ENCODE measurements at regions of chr19 and their contacts with region 1.

Region 1: GRCh38 chr19:771332-771785 is 20.4 kb downstream of the MISP start:
- DNase-seq: peak; percentile 55
- ATAC-seq: peak; percentile 75
- H3K4me3 ChIP-seq: no peak overlapping the region
- H3K27ac ChIP-seq: no peak overlapping the region
- H3K4me1 ChIP-seq: peaks cover 4 to 14% of the 10 kb centered on the region in 2 experiments
- H3K27me3 ChIP-seq: no peaks in the 10 kb centered on the region
- CTCF ChIP-seq: peak; percentile 44 to 77 (median 62); a peak in 5 of 6 replicates
- POLR2A ChIP-seq: no peak
- RAD21 ChIP-seq: peak; percentile 55

Region 2: GRCh38 chr19:860481-861101 is 89.2 kb after region 1 on chr19:
- CTCF ChIA-PET with region 1: interaction called, 6 read pairs
- POLR2A ChIA-PET with region 1: no interaction called
- RAD21 ChIA-PET with region 1: interaction called in 1 of 2 experiments, 3 read pairs
- intact Hi-C with region 1: loop called (anchors 2 kb)
- DNase-seq: peak; percentile 73
- ATAC-seq: peak; percentile 79
- H3K4me3 ChIP-seq: peak overlapping the region; percentile 71 to 78
- H3K27ac ChIP-seq: peak overlapping the region; percentile 96
- H3K4me1 ChIP-seq: peaks cover 14 to 32% of the 10 kb centered on the region in 2 experiments
- H3K27me3 ChIP-seq: no peaks in the 10 kb centered on the region
- CTCF ChIP-seq: peak in 1 of 3 experiments; percentile 23; a peak in 1 of 6 replicates
- POLR2A ChIP-seq: peak; percentile 61
- RAD21 ChIP-seq: peak; percentile 22; the same call in 1 of the 2 replicates

Region 3: DNA sequence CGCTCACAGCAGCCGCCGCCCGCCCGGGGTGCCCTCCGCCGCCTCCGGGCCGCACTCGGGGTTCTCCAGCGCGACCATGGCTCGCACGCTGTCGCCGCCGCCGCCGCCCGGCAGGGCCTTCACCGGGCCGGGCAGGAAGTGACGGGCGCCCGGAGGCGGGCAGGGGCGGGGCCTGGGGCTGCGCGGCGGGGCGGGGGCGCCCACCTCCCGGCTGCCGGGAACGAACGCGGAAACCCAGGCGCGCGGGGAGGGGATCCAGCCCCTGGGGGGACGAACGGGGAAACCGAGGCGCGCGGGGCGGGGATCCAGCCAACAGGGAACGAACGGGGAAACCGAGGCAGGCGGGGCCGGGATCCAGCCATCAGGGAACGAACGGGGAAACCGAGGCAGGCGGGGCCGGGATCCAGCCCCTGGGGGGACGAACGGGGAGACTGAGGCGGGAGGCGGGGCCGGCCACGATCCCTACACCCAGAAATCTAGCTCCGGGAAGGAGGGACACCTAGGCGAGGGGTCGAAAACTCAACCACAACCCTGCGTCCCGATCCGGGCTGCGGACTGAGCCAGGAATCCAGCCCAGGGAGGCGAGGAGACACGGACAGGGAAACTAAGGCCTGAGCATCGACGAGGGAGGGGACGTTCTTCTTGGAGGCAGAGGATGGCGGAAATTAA is 141.9 kb after region 1 on chr19 and contains the start of gene R3HDM4:
- CTCF ChIA-PET with region 1: no interaction called
- POLR2A ChIA-PET with region 1: no interaction called
- RAD21 ChIA-PET with region 1: interaction called in 1 of 2 experiments, 3 read pairs
- intact Hi-C with region 1: loop called (anchors 1 kb)
- DNase-seq: no peak
- ATAC-seq: peak; percentile 57
- H3K4me3 ChIP-seq: peak within 1 kb of the TSS; percentile 78 to 81
- H3K27ac ChIP-seq: peak within 1 kb of the TSS; percentile 80
- H3K4me1 ChIP-seq: peaks cover 31 to 55% of the 10 kb centered on the region in 2 experiments
- H3K27me3 ChIP-seq: no peaks in the 10 kb centered on the region
- CTCF ChIP-seq: no peak
- POLR2A ChIP-seq: peak; percentile 42
- RAD21 ChIP-seq: no peak
- total RNA-seq, gene R3HDM4: 92.3 TPM

Region 4: DNA sequence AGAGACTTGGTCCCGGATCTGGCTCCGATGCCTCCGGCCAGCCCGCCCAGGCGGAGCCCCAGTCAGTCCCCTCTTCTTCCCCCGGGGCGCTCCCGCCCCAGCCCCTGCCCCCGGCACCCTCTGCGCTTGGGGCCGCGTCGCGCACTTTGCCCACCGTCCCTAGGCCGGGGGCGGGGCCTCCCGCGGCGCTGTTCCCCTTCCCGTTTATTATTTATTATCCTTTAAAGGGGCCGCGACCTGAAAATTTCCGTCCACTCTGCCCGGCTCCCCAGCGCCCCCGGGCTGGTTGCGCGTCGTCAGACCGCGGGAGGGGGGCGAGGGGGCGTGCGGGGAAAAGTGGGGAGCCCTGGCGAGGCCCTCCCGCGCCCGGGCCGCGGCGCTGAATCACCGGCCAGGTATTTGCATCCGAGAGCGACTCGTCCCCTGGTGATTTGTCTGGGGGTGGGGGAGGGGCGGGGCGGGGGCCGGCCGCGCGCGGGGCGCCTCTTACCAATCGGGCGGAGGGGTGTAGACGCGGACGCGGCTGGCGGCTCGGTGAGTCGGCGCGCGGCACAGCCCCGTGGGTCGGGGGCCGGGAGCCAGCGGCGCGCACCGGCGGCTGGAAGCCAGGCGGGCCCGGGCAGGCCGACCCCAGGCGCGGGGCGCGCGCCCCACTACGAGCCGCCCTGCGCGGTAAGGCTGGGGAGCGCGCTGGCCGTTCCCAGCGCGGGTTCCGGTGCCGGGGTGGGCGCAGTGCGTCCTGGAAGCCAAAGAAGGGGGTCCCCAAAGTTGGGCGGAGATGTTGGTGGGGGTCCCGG is 154.4 kb after region 1 on chr19 and contains the start of gene ARID3A:
- CTCF ChIA-PET with region 1: no interaction called
- POLR2A ChIA-PET with region 1: interaction called, 3 read pairs
- RAD21 ChIA-PET with region 1: no interaction called
- intact Hi-C with region 1: loop called (anchors 1 kb)
- DNase-seq: peak; percentile 71
- ATAC-seq: peak; percentile 58
- H3K4me3 ChIP-seq: peak within 1 kb of the TSS; percentile 84 to 87
- H3K27ac ChIP-seq: peak within 1 kb of the TSS; percentile 91
- H3K4me1 ChIP-seq: peaks cover 13 to 49% of the 10 kb centered on the region in 2 experiments
- H3K27me3 ChIP-seq: no peaks in the 10 kb centered on the region
- CTCF ChIP-seq: no peak
- POLR2A ChIP-seq: no peak
- RAD21 ChIP-seq: no peak
- total RNA-seq, gene ARID3A: 21.8 TPM

Region 5: GRCh38 chr19:984165-984967 is 213.0 kb after region 1 on chr19 and contains the start of gene WDR18:
- CTCF ChIA-PET with region 1: interaction called, 10 read pairs
- POLR2A ChIA-PET with region 1: no interaction called
- RAD21 ChIA-PET with region 1: no interaction called
- intact Hi-C with region 1: loop called (anchors 2 kb)
- DNase-seq: peak; percentile 71
- ATAC-seq: peak; percentile 67
- H3K4me3 ChIP-seq: peak within 1 kb of the TSS; percentile 92 to 99
- H3K27ac ChIP-seq: peak within 1 kb of the TSS; percentile 88
- H3K4me1 ChIP-seq: peaks cover 22 to 40% of the 10 kb centered on the region in 2 experiments
- H3K27me3 ChIP-seq: no peaks in the 10 kb centered on the region
- CTCF ChIP-seq: no peak
- POLR2A ChIP-seq: peak; percentile 62
- RAD21 ChIP-seq: no peak
- total RNA-seq, gene WDR18: 124 TPM